PC-9 (cell line): ENCODE measurements at regions of chr19 and their contacts with region 1.

Region 1: DNA sequence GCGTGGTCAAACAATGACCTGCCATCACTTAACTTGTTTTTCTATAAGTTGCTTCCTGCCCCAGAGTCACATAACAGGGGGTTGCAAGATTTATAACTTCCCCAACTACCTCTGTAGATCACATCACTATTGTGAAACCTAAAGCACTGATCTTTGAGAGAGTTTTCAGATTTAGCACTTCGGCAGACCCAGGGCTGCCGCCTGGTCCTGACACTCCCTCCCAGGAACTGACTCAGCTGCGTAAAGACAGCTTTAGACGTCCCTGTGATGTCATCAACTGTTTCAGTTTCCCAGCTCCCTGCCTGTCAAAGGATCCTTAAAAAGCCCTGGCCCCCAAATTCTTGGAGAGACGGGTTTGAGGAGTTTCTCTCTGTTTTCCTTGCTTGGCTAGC is 33.3 kb downstream of the IGFL2 start:
- DNase-seq: peak in 1 of 2 experiments; percentile 73
- H3K4me3 ChIP-seq: peak overlapping the region; percentile 8; the same call in 1 of the 2 replicates
- H3K27ac ChIP-seq: peak overlapping the region; percentile 74
- H3K4me1 ChIP-seq: peaks cover 36% of the 10 kb centered on the region
- H3K27me3 ChIP-seq: no peaks in the 10 kb centered on the region
- CTCF ChIP-seq: no peak

Region 2: DNA sequence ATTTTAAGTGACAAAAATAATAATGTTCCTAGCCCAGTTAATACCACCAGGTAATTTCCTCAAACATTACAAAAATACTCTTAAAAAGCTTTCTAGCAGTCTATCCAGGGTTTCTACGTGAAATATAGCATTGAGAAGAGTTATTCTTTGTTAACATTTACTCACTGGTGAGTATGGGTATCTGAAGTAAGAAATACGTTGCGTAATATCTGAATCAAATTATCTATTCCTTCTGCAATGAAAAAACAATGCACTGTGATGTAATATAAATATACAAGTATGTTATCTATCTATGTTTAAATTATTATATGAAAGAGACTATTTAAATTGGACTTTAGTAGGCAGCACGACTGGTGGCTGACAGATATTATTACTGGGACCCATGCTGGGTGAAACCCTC is 39.1 kb before region 1 on chr19:
- CTCF ChIA-PET with region 1: no interaction called
- POLR2A ChIA-PET with region 1: interaction called, 25 read pairs
- intact Hi-C with region 1: no loop called
- DNase-seq: no peak
- H3K4me3 ChIP-seq: no peak overlapping the region
- H3K27ac ChIP-seq: no peak overlapping the region
- H3K4me1 ChIP-seq: no peaks in the 10 kb centered on the region
- H3K27me3 ChIP-seq: no peaks in the 10 kb centered on the region
- CTCF ChIP-seq: no peak

Region 3: DNA sequence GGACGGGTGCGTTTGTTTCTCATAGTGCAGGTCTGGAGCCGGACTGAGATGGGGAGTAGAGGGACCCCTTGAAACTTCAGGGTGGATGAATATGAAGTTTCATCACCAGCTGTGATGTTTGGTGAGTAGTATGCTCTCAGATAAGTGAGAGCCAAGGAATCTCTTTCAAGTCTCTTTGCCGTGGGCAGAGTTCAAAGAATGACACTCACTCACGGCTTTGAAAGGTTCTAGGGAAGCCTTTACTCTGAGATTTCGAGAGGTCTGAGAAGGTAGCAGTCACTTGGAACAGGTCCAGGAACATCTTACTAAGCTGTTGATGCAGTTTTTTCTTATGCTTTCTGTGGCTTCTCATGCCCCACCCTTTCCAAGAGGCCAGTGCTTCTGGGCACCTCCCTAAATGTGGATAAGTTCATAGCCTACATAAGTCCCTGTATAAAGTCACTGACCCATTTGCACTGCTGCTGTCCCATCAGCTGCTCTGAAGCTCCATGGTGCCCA is 33.5 kb before region 1 on chr19 and contains the start of gene IGFL2:
- CTCF ChIA-PET with region 1: no interaction called
- POLR2A ChIA-PET with region 1: interaction called, 26 read pairs
- intact Hi-C with region 1: no loop called
- DNase-seq: peak in 1 of 2 experiments; percentile 14
- H3K4me3 ChIP-seq: no peak within 1 kb of the TSS
- H3K27ac ChIP-seq: no peak within 1 kb of the TSS
- H3K4me1 ChIP-seq: 0 out of 2 replicates have a peak, but pooled peaks cover 6% of the 10 kb centered on the region
- H3K27me3 ChIP-seq: no peaks in the 10 kb centered on the region
- CTCF ChIP-seq: no peak
- total RNA-seq, gene IGFL2: 1.0 TPM in 1 of 2 replicates, not detected in the other

Region 4: GRCh38 chr19:46346821-46347571 is 165.6 kb after region 1 on chr19 and contains the start of gene PPP5C:
- CTCF ChIA-PET with region 1: no interaction called
- POLR2A ChIA-PET with region 1: no interaction called
- intact Hi-C with region 1: no loop called
- DNase-seq: peak; percentile 86 to 93
- H3K4me3 ChIP-seq: peak within 1 kb of the TSS; percentile 97
- H3K27ac ChIP-seq: peak within 1 kb of the TSS; percentile 20; the same call in 1 of the 2 replicates
- H3K4me1 ChIP-seq: peaks cover 12% of the 10 kb centered on the region
- H3K27me3 ChIP-seq: peaks cover 13% of the 10 kb centered on the region
- CTCF ChIP-seq: peak; percentile 97
- total RNA-seq, gene PPP5C: 74.7 and 85.4 TPM in 2 replicates

Region 5: DNA sequence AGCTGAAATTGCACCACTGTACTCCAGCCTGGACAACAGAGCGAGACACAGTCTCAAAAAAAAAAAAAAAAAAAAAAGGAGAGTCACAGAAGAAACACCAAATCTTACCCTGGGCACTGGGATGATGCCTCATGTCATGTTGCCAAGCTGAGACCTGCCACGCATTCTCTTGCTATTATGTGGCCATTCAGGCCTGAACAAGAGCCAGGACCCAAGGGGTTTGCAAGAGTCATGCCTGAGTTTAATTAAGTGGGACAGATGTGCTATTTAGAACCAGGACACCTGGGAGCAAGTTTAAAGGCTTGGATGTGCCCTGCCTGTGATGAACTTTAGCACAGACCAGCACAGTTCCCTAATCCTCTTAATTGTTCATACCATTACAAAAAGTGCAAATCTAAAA is 280.2 kb after region 1 on chr19:
- CTCF ChIA-PET with region 1: no interaction called
- POLR2A ChIA-PET with region 1: no interaction called
- intact Hi-C with region 1: no loop called
- DNase-seq: no peak
- H3K4me3 ChIP-seq: no peak overlapping the region
- H3K27ac ChIP-seq: no peak overlapping the region
- H3K4me1 ChIP-seq: 0 out of 2 replicates have a peak, but pooled peaks cover 1% of the 10 kb centered on the region
- H3K27me3 ChIP-seq: peaks cover 91% of the 10 kb centered on the region
- CTCF ChIP-seq: no peak